ENCODE measurements at regions of chr9 and their contacts with region 1.

Region 1: GRCh38 chr9:1875921-1876448 is 139.2 kb upstream of the SMARCA2 start:
- DNase-seq: no peak
- H3K4me3 Mint-ChIP-seq: no peak overlapping the region
- H3K27ac Mint-ChIP-seq: peak overlapping the region; percentile 80
- H3K4me1 Mint-ChIP-seq: peaks cover 19% of the 10 kb centered on the region
- H3K27me3 Mint-ChIP-seq: peaks cover 30% of the 10 kb centered on the region

Region 2: GRCh38 chr9:1490341-1491232 is 385.4 kb before region 1 on chr9:
- intact Hi-C with region 1: loop called (anchors 5 kb)
- DNase-seq: no peak
- H3K4me3 Mint-ChIP-seq: peak overlapping the region; percentile 11
- H3K27ac Mint-ChIP-seq: peak overlapping the region; percentile 93
- H3K4me1 Mint-ChIP-seq: peaks cover 16% of the 10 kb centered on the region
- H3K27me3 Mint-ChIP-seq: no peaks in the 10 kb centered on the region

Region 3: DNA sequence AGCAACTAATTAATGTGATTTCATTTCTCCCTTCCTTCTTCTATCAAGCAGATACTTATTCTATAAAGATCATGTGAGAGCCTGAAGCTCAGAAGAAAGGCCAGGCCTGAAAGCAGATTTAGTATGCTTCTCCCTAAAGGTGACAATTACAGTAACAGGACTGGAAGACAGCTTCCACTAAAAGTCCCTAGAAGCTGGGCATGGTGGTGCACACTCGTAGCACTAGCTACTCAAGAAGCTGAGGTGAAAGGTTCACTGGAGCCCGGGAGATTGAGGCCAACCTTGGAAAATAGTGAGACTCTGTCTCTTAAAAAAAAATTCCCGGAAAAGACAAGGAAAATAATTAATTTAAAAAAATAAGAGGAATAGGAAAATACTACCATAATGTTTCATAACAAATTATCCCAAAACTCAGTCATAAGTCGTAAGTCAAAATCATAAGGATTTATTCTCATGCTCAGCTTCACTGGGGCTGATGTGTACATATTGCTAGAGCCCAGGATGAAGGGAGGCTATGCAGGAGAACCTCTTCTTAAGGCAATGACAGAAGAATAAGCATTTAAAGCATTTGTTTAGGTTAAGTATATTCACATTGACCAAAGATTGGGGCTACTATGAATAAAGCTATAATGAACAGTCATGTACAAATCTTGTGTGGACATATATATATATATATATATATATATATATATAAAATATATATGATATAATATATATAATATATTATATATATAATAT is 71.7 kb before region 1 on chr9:
- intact Hi-C with region 1: loop called (anchors 2 kb)
- DNase-seq: no peak
- H3K4me3 Mint-ChIP-seq: no peak overlapping the region
- H3K27ac Mint-ChIP-seq: no peak overlapping the region
- H3K4me1 Mint-ChIP-seq: peaks cover 4% of the 10 kb centered on the region
- H3K27me3 Mint-ChIP-seq: no peaks in the 10 kb centered on the region

Region 4: GRCh38 chr9:2023532-2023931 is 147.5 kb after region 1 on chr9:
- intact Hi-C with region 1: loop called (anchors 1 kb)
- DNase-seq: peak; percentile 21
- H3K4me3 Mint-ChIP-seq: peak overlapping the region; percentile 71
- H3K27ac Mint-ChIP-seq: peak overlapping the region; percentile 90
- H3K4me1 Mint-ChIP-seq: peaks cover 93% of the 10 kb centered on the region
- H3K27me3 Mint-ChIP-seq: no peaks in the 10 kb centered on the region

Region 5: GRCh38 chr9:2620919-2621679 is 745.1 kb after region 1 on chr9:
- intact Hi-C with region 1: loop called (anchors 5 kb)
- DNase-seq: peak; percentile 47
- H3K4me3 Mint-ChIP-seq: peak overlapping the region; percentile 87
- H3K27ac Mint-ChIP-seq: peak overlapping the region; percentile 83
- H3K4me1 Mint-ChIP-seq: peaks cover 27% of the 10 kb centered on the region
- H3K27me3 Mint-ChIP-seq: peaks cover 30% of the 10 kb centered on the region

Measured in activated T-helper 2 cell treated with anti-CD3 and anti-CD28 coated beads, Interferon-gamma antibody, Interleukin-2, Interleukin-4, amounts not matched to agents 10 μg/mL and 5 μg/mL and 100 μg/mL, durations not matched to agents 14 hours and 24 hours and 36 hours (primary cell).